Gastrocnemius medialis (tissue), 4 donors: ENCODE measurements at regions of chr7 and their contacts with region 1.

Region 1: GRCh38 chr7:107890962-107891635 is at the start of gene DLD:
- DNase-seq: peak; percentile 89 to 92
- ATAC-seq: peak; percentile 98
- H3K4me3 ChIP-seq: peak within 1 kb of the TSS; percentile 68 to 90 (median 84)
- H3K27ac ChIP-seq: peak within 1 kb of the TSS; percentile 93 to 98 (median 96)
- H3K4me1 ChIP-seq: peaks cover 36 to 42% of the 10 kb centered on the region in 2 donors
- H3K27me3 ChIP-seq: no peaks in the 10 kb centered on the region
- CTCF ChIP-seq: no peak
- POLR2A ChIP-seq: peak; percentile 88 to 91
- total RNA-seq, gene DLD: 110 to 157 (median 146) TPM

Region 2: DNA sequence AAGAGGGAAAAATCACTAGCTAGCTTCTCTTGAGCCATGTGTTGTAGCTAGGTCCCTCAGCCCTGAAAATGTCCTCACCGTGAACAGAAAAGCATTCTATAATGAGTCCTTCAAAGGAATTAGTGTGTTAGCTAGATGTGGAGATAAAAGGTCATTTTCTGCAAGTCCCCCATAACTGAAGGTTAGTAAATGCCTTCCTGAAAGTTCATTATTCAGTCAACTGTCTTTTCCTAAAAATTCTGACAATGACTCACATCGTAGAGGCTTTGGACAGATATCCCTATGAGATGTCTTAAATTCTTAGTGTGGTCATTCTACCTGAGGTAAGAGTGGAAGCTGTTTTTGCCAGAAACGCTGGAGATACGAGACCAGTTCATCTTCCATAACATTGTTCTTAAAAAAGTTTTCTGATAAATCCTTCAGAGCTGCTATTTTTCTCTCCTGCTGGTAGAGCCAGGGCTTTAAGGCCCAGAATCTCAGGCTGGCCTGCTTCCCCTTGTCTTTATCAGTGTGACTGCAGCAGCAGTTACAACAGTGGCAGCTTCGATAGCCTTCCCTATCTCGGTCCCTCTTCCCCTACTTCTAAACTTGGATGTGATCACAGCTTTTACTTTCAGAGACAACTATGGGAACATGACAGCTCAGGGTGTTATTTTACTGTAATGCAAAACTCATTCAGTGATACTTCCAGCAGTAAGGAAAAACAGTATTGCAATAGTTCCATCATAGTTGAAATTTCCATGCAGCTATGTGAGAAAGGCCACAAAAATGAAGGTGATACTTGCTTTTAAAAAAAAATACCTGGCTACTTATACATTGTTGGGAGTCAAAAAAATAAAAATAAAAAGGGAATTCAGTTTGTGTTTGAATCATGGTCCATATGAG is 883.9 kb before region 1 on chr7:
- in situ Hi-C with region 1: no loop called
- intact Hi-C with region 1: no loop called
- DNase-seq: no peak
- ATAC-seq: no peak
- H3K4me3 ChIP-seq: no peak overlapping the region
- H3K27ac ChIP-seq: no peak overlapping the region
- H3K4me1 ChIP-seq: no peaks in the 10 kb centered on the region
- H3K27me3 ChIP-seq: no peaks in the 10 kb centered on the region
- CTCF ChIP-seq: no peak
- POLR2A ChIP-seq: no peak

Region 3: DNA sequence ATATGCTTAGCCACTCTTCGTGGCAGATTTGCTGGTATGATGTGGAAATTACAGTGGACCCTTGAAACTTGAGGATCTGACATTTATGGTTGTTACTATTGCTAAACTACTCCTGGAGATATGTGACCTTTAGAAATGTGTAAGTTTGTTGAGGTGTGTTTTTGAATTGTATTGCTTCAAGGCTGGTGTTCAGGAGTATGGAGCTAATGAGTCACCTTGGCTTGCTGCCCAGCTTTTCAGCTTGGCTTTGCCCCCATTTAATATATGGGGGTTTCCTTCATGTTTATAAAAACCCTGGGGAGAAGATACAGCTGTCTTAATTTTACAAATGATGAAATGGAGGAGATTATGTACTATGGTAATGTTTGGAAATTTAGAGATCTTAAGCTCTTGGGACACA is 710.7 kb before region 1 on chr7:
- in situ Hi-C with region 1: loop called in 1 of 4 experiments (anchors 25 kb)
- intact Hi-C with region 1: no loop called
- DNase-seq: no peak
- ATAC-seq: no peak
- H3K4me3 ChIP-seq: no peak overlapping the region
- H3K27ac ChIP-seq: peak overlapping the region; percentile 23 to 51 (median 38)
- H3K4me1 ChIP-seq: peaks cover 40 to 42% of the 10 kb centered on the region in 2 donors
- H3K27me3 ChIP-seq: no peaks in the 10 kb centered on the region
- CTCF ChIP-seq: no peak
- POLR2A ChIP-seq: no peak

Region 4: GRCh38 chr7:107462740-107463444 is 428.2 kb before region 1 on chr7:
- in situ Hi-C with region 1: loop called in 1 of 4 experiments (anchors 25 kb)
- intact Hi-C with region 1: no loop called
- DNase-seq: peak; percentile 10 to 57
- ATAC-seq: peak; percentile 82 to 94
- H3K4me3 ChIP-seq: no peak overlapping the region
- H3K27ac ChIP-seq: no peak overlapping the region
- H3K4me1 ChIP-seq: no peaks in the 10 kb centered on the region
- H3K27me3 ChIP-seq: no peaks in the 10 kb centered on the region
- CTCF ChIP-seq: peak; percentile 55 to 72 (median 65)
- POLR2A ChIP-seq: no peak

Region 5: GRCh38 chr7:107972075-107972482 is 81.0 kb after region 1 on chr7:
- in situ Hi-C with region 1: no loop called
- intact Hi-C with region 1: loop called (anchors 10 kb)
- DNase-seq: peak; percentile 50 to 54
- ATAC-seq: peak; percentile 90
- H3K4me3 ChIP-seq: no peak overlapping the region
- H3K27ac ChIP-seq: peak overlapping the region; percentile 49 to 71 (median 65)
- H3K4me1 ChIP-seq: peaks cover 11 to 23% of the 10 kb centered on the region in 2 donors
- H3K27me3 ChIP-seq: no peaks in the 10 kb centered on the region
- CTCF ChIP-seq: no peak
- POLR2A ChIP-seq: no peak